CD4-positive, alpha-beta T cell (primary cell): ENCODE measurements at regions of chr17 and their contacts with region 1.

Region 1: GRCh38 chr17:63406689-63407330 is 39.3 kb downstream of the CYB561 start:
- DNase-seq: peak; percentile 28 to 88 (median 56)
- ATAC-seq: peak; percentile 78
- H3K4me3 ChIP-seq: no peak overlapping the region
- H3K4me3 Mint-ChIP-seq: no peak overlapping the region
- H3K27ac ChIP-seq: no peak overlapping the region
- H3K27ac Mint-ChIP-seq: no peak overlapping the region
- H3K4me1 ChIP-seq: no peaks in the 10 kb centered on the region
- H3K4me1 Mint-ChIP-seq: peaks cover 5% of the 10 kb centered on the region
- H3K27me3 ChIP-seq: no peaks in the 10 kb centered on the region
- H3K27me3 Mint-ChIP-seq: no peaks in the 10 kb centered on the region
- CTCF ChIP-seq: peak; percentile 82

Region 2: GRCh38 chr17:62562656-62563055 is 844.2 kb before region 1 on chr17:
- CTCF ChIA-PET with region 1: no interaction called
- POLR2A ChIA-PET with region 1: no interaction called
- intact Hi-C with region 1: loop called in 1 of 2 experiments (anchors 10 kb)
- DNase-seq: no peak
- ATAC-seq: no peak
- H3K4me3 ChIP-seq: no peak overlapping the region
- H3K4me3 Mint-ChIP-seq: no peak overlapping the region
- H3K27ac ChIP-seq: no peak overlapping the region
- H3K27ac Mint-ChIP-seq: no peak overlapping the region
- H3K4me1 ChIP-seq: no peaks in the 10 kb centered on the region
- H3K4me1 Mint-ChIP-seq: peaks cover 17% of the 10 kb centered on the region
- H3K27me3 ChIP-seq: no peaks in the 10 kb centered on the region
- H3K27me3 Mint-ChIP-seq: no peaks in the 10 kb centered on the region
- CTCF ChIP-seq: no peak

Region 3: DNA sequence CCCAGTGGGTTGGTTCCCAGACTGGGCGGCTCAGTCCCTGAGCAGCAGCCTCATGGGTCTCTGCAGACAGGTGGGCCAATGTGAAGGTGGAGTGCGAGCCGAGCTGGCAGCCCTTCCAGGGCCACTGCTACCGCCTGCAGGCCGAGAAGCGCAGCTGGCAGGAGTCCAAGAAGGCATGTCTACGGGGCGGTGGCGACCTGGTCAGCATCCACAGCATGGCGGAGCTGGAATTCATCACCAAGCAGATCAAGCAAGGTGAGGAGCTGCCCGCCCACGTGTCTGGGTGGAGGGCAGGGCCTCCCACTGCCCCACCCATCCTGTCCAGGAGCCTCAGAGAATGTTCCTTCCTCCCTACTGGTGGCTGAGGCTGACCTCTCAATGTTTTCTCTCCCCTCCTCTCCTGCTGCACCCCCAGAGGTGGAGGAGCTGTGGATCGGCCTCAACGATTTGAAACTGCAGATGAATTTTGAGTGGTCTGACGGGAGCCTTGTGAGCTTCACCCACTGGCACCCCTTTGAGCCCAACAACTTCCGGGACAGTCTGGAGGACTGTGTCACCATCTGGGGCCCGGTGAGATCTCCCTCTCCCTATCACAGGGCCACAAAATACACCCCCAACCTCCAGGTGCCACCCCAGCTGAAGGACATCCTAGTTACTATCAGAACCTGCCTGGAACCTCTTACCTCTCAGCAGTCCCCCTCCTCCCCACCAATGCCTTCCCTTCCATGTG is 735.1 kb before region 1 on chr17:
- CTCF ChIA-PET with region 1: interaction called, 14 read pairs
- POLR2A ChIA-PET with region 1: no interaction called
- intact Hi-C with region 1: loop called in 1 of 2 experiments (anchors 1 kb)
- DNase-seq: no peak
- ATAC-seq: no peak
- H3K4me3 ChIP-seq: no peak overlapping the region
- H3K4me3 Mint-ChIP-seq: no peak overlapping the region
- H3K27ac ChIP-seq: no peak overlapping the region
- H3K27ac Mint-ChIP-seq: no peak overlapping the region
- H3K4me1 ChIP-seq: no peaks in the 10 kb centered on the region
- H3K4me1 Mint-ChIP-seq: no peaks in the 10 kb centered on the region
- H3K27me3 ChIP-seq: no peaks in the 10 kb centered on the region
- H3K27me3 Mint-ChIP-seq: no peaks in the 10 kb centered on the region
- CTCF ChIP-seq: no peak

Region 4: GRCh38 chr17:62703775-62704378 is 702.9 kb before region 1 on chr17:
- CTCF ChIA-PET with region 1: interaction called, 10 read pairs
- POLR2A ChIA-PET with region 1: no interaction called
- intact Hi-C with region 1: loop called (anchors 1 kb)
- DNase-seq: peak; percentile 30 to 85 (median 67)
- ATAC-seq: peak; percentile 94
- H3K4me3 ChIP-seq: peak overlapping the region; percentile 56
- H3K4me3 Mint-ChIP-seq: peak overlapping the region; percentile 34
- H3K27ac ChIP-seq: no peak overlapping the region
- H3K27ac Mint-ChIP-seq: no peak overlapping the region
- H3K4me1 ChIP-seq: peaks cover 16% of the 10 kb centered on the region
- H3K4me1 Mint-ChIP-seq: peaks cover 4% of the 10 kb centered on the region
- H3K27me3 ChIP-seq: no peaks in the 10 kb centered on the region
- H3K27me3 Mint-ChIP-seq: peaks cover 16% of the 10 kb centered on the region
- CTCF ChIP-seq: peak; percentile 78

Region 5: GRCh38 chr17:63634163-63634562 is 227.4 kb after region 1 on chr17:
- CTCF ChIA-PET with region 1: no interaction called
- POLR2A ChIA-PET with region 1: no interaction called
- intact Hi-C with region 1: no loop called
- DNase-seq: no peak
- ATAC-seq: no peak
- H3K4me3 ChIP-seq: no peak overlapping the region
- H3K4me3 Mint-ChIP-seq: no peak overlapping the region
- H3K27ac ChIP-seq: no peak overlapping the region
- H3K27ac Mint-ChIP-seq: no peak overlapping the region
- H3K4me1 ChIP-seq: peaks cover 10% of the 10 kb centered on the region
- H3K4me1 Mint-ChIP-seq: peaks cover 66% of the 10 kb centered on the region
- H3K27me3 ChIP-seq: no peaks in the 10 kb centered on the region
- H3K27me3 Mint-ChIP-seq: no peaks in the 10 kb centered on the region
- CTCF ChIP-seq: no peak